ENCODE measurements at regions of chr7 and their contacts with region 1.

Region 1: DNA sequence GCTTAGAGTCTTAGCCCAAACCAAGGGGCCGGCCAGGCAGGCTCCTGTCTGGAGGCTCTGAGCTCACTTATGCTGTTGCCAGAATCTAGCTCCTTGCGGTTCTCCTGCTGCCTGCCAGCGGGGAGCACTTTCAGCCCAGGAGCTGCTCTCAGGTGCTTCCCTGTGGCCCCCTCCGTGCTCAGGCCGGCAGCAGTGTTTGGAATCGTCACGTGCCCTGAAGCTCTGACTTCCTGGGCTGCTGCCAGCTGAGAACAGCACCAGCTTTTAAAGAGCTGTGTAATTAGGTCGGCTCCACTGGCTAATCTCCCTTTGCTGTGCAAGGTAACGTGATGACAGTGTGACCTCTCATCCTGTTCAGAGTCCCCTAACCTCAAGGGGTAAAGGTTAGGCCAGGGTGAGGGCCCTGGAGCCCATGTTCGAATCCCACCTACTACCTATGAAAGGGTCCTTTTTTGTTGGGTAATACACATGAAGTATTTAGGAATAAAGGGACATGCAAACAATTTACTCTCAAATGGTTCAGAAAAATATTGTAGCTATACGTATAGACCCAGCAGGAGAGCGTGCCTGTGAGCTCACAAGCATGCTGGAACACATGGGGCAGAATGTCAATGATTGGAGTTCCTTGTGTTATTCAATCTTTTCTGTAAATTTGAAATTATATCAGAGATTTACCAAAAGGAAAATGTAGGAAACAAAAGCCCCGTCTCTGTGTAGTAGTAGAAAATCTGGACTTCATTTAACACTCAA is 16.6 kb downstream of the ZNF862 start:
- DNase-seq: peak in 3 of 9 experiments; percentile 44 to 56 (median 45)
- ATAC-seq: peak; percentile 55
- H3K4me3 ChIP-seq: no peak overlapping the region
- H3K4me3 Mint-ChIP-seq: peak overlapping the region; percentile 29
- H3K27ac ChIP-seq: no peak overlapping the region
- H3K27ac Mint-ChIP-seq: peak overlapping the region; percentile 77
- H3K4me1 ChIP-seq: peaks cover 48% of the 10 kb centered on the region
- H3K4me1 Mint-ChIP-seq: peaks cover 58% of the 10 kb centered on the region
- H3K27me3 ChIP-seq: no peaks in the 10 kb centered on the region
- H3K27me3 Mint-ChIP-seq: no peaks in the 10 kb centered on the region
- CTCF ChIP-seq: no peak

Region 2: GRCh38 chr7:149828357-149829309 is 26.2 kb before region 1 on chr7:
- CTCF ChIA-PET with region 1: no interaction called
- POLR2A ChIA-PET with region 1: no interaction called
- intact Hi-C with region 1: no loop called
- DNase-seq: no peak
- ATAC-seq: no peak
- H3K4me3 ChIP-seq: no peak overlapping the region
- H3K4me3 Mint-ChIP-seq: no peak overlapping the region
- H3K27ac ChIP-seq: no peak overlapping the region
- H3K27ac Mint-ChIP-seq: no peak overlapping the region
- H3K4me1 ChIP-seq: no peaks in the 10 kb centered on the region
- H3K4me1 Mint-ChIP-seq: peaks cover 7% of the 10 kb centered on the region
- H3K27me3 ChIP-seq: no peaks in the 10 kb centered on the region
- H3K27me3 Mint-ChIP-seq: peaks cover 5% of the 10 kb centered on the region
- CTCF ChIP-seq: no peak

Region 3: DNA sequence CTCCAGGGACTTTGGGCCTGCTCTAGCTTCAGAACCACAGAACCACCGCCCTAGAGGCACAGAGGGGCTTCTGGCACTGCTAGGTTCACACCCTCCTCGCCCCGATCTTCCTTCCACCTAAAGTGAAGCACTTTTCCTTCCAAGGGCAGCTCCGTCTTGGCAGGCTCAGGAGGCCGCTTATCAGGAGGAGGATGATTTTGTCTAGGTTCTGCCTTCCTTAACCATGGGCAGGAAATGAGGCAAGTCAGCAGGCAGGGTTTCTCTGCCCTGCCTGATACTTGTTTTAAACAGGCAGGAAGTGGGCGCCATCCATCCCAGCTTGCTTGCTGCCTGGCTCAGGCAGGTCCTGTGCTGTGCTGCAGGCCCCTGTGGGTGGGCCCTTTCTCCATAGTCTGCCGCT is 10.7 kb after region 1 on chr7:
- CTCF ChIA-PET with region 1: interaction called, 6 read pairs
- POLR2A ChIA-PET with region 1: interaction called, 13 read pairs
- intact Hi-C with region 1: loop called in 1 of 2 experiments (anchors 2 kb)
- DNase-seq: peak; percentile 33 to 84 (median 68)
- ATAC-seq: peak; percentile 75
- H3K4me3 ChIP-seq: peak overlapping the region; percentile 6 to 33
- H3K4me3 Mint-ChIP-seq: peak overlapping the region; percentile 67
- H3K27ac ChIP-seq: peak overlapping the region; percentile 66 to 91
- H3K27ac Mint-ChIP-seq: peak overlapping the region; percentile 98
- H3K4me1 ChIP-seq: peaks cover 92% of the 10 kb centered on the region
- H3K4me1 Mint-ChIP-seq: peaks cover 83% of the 10 kb centered on the region
- H3K27me3 ChIP-seq: no peaks in the 10 kb centered on the region
- H3K27me3 Mint-ChIP-seq: no peaks in the 10 kb centered on the region
- CTCF ChIP-seq: no peak

Region 4: DNA sequence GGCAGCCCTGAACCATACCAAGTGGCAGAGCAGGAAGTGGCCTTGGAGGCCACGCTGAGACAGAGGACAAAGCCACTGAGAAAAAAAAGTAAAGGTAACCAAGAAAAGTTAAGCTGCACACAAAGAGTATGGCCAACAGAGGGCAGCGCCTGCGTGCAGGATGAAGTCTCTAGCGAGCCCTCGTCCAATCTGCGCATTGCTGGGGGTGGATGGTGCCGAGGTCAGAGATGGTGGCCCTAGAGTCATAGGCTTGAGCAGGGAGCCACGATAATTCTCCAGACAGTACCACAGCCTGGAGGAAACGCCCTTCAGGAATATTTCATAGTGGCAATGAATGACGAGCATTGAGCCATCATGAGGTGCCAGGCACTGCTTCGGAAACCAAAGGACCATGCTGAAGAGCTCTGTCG is 28.7 kb after region 1 on chr7:
- CTCF ChIA-PET with region 1: interaction called, 10 read pairs
- POLR2A ChIA-PET with region 1: interaction called, 3 read pairs
- intact Hi-C with region 1: no loop called
- DNase-seq: peak in 6 of 9 experiments; percentile 52 to 72 (median 61)
- ATAC-seq: peak; percentile 81
- H3K4me3 ChIP-seq: no peak overlapping the region
- H3K4me3 Mint-ChIP-seq: no peak overlapping the region
- H3K27ac ChIP-seq: no peak overlapping the region
- H3K27ac Mint-ChIP-seq: no peak overlapping the region
- H3K4me1 ChIP-seq: peaks cover 8% of the 10 kb centered on the region
- H3K4me1 Mint-ChIP-seq: peaks cover 19% of the 10 kb centered on the region
- H3K27me3 ChIP-seq: no peaks in the 10 kb centered on the region
- H3K27me3 Mint-ChIP-seq: no peaks in the 10 kb centered on the region
- CTCF ChIP-seq: peak; percentile 56

Measured in CD8-positive, alpha-beta T cell (primary cell).